ENCODE measurements at regions of chr4 and their contacts with region 1.

Region 1: GRCh38 chr4:152138451-152138850 is 377.6 kb upstream of the GATB start:
- DNase-seq: no peak

Region 2: GRCh38 chr4:151652841-151653547 is 485.5 kb before region 1 on chr4:
- intact Hi-C with region 1: no loop called
- DNase-seq: no peak

Region 3: GRCh38 chr4:152176627-152177214 is 38.3 kb after region 1 on chr4:
- intact Hi-C with region 1: loop called (anchors 1 kb)
- DNase-seq: no peak